ENCODE measurements at regions of chr7 and their contacts with region 1.

Region 1: GRCh38 chr7:148590471-148590870 is at the start of gene C7orf33:
- DNase-seq: no peak
- H3K4me3 ChIP-seq: no peak within 1 kb of the TSS
- H3K27ac ChIP-seq: no peak within 1 kb of the TSS
- H3K4me1 ChIP-seq: no peaks in the 10 kb centered on the region
- H3K27me3 ChIP-seq: no peaks in the 10 kb centered on the region
- CTCF ChIP-seq: no peak
- POLR2A ChIP-seq: no peak
- total RNA-seq, gene C7orf33: 0.19 to 0.24 TPM

Region 2: DNA sequence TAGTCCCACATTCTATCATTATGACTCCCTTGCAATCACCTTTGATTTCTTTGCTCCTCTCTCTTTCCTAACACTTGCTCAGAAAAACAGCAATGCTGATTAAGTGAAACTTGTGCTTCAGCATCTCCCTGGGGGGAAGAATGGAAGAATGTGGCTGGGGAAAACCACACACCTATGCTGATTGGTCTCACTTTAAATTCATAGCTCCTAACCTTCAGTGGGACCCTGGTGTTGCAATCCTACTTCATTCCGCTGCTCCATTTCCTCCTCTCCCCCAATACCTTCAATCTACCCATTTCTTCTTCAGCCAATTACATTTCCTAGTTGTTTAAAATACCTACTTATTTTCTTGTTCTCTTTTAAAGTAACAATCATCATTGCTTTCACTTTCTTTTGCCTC is 1166.6 kb before region 1 on chr7:
- intact Hi-C with region 1: no loop called
- DNase-seq: no peak
- H3K4me3 ChIP-seq: no peak overlapping the region
- H3K27ac ChIP-seq: no peak overlapping the region
- H3K4me1 ChIP-seq: no peaks in the 10 kb centered on the region
- H3K27me3 ChIP-seq: no peaks in the 10 kb centered on the region
- CTCF ChIP-seq: no peak
- POLR2A ChIP-seq: no peak

Region 3: GRCh38 chr7:148367731-148368475 is 222.6 kb before region 1 on chr7:
- intact Hi-C with region 1: no loop called
- DNase-seq: no peak
- H3K4me3 ChIP-seq: no peak overlapping the region
- H3K27ac ChIP-seq: no peak overlapping the region
- H3K4me1 ChIP-seq: no peaks in the 10 kb centered on the region
- H3K27me3 ChIP-seq: no peaks in the 10 kb centered on the region
- CTCF ChIP-seq: no peak
- POLR2A ChIP-seq: no peak

Region 4: GRCh38 chr7:148650232-148650858 is 59.9 kb after region 1 on chr7:
- intact Hi-C with region 1: loop called (anchors 10 kb)
- DNase-seq: no peak
- H3K4me3 ChIP-seq: no peak overlapping the region
- H3K27ac ChIP-seq: no peak overlapping the region
- H3K4me1 ChIP-seq: no peaks in the 10 kb centered on the region
- H3K27me3 ChIP-seq: no peaks in the 10 kb centered on the region
- CTCF ChIP-seq: no peak
- POLR2A ChIP-seq: no peak

Region 5: DNA sequence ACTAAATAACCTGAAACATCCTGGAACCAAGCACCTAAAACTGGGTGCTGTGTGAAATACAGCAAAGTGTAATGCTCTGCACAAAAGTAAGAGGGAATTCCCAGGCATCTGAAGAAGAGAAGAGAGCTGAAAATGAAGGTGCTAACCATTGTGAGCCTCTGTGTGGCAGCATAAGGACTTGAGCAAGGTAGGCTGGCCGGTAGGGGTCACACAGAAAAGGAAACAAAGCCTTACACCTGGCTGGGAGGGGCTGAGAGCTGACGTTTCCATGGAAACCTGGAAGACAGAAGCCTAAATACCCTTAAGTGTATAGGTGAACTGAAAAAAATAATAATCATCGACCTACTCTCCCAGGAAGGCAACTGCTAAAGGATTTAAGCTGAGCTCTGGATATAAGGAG is 156.8 kb after region 1 on chr7:
- intact Hi-C with region 1: no loop called
- DNase-seq: no peak
- H3K4me3 ChIP-seq: no peak overlapping the region
- H3K27ac ChIP-seq: no peak overlapping the region
- H3K4me1 ChIP-seq: no peaks in the 10 kb centered on the region
- H3K27me3 ChIP-seq: no peaks in the 10 kb centered on the region
- CTCF ChIP-seq: no peak
- POLR2A ChIP-seq: no peak

Measured in testis (tissue), 5 donors.